CD8-positive, alpha-beta memory T cell (primary cell): ENCODE measurements at regions of chr12 and their contacts with region 1.

Region 1: GRCh38 chr12:103930034-103930786 is at the start of gene HSP90B1:
- DNase-seq: peak; percentile 99 to 100 (median 100)
- H3K4me3 ChIP-seq: peak within 1 kb of the TSS; percentile 74
- H3K4me3 Mint-ChIP-seq: peak within 1 kb of the TSS; percentile 89 to 98 (median 94)
- H3K27ac ChIP-seq: peak within 1 kb of the TSS; percentile 93
- H3K27ac Mint-ChIP-seq: peak within 1 kb of the TSS; percentile 99 to 100 (median 100)
- H3K4me1 ChIP-seq: peaks cover 57% of the 10 kb centered on the region
- H3K4me1 Mint-ChIP-seq: peaks cover 56 to 75% (median 71%) of the 10 kb centered on the region in 3 donors
- H3K27me3 ChIP-seq: no peaks in the 10 kb centered on the region
- H3K27me3 Mint-ChIP-seq: peaks cover 0 to 11% of the 10 kb centered on the region in 2 donors
- total RNA-seq, gene HSP90B1: 461 to 488 TPM

Region 2: GRCh38 chr12:103901518-103902173 is 28.6 kb before region 1 on chr12:
- CTCF ChIA-PET with region 1: interaction called, 23 read pairs
- POLR2A ChIA-PET with region 1: interaction called, 10 read pairs
- DNase-seq: peak in 4 of 5 donors; percentile 8 to 79 (median 66)
- H3K4me3 ChIP-seq: peak overlapping the region; percentile 49
- H3K4me3 Mint-ChIP-seq: peak overlapping the region; percentile 24 to 75 (median 69)
- H3K27ac ChIP-seq: no peak overlapping the region
- H3K27ac Mint-ChIP-seq: peak overlapping the region; percentile 43 to 89 (median 82)
- H3K4me1 ChIP-seq: peaks cover 55% of the 10 kb centered on the region
- H3K4me1 Mint-ChIP-seq: peaks cover 46 to 57% (median 56%) of the 10 kb centered on the region in 3 donors
- H3K27me3 ChIP-seq: no peaks in the 10 kb centered on the region
- H3K27me3 Mint-ChIP-seq: peaks cover 0 to 5% of the 10 kb centered on the region in 2 donors

Region 3: DNA sequence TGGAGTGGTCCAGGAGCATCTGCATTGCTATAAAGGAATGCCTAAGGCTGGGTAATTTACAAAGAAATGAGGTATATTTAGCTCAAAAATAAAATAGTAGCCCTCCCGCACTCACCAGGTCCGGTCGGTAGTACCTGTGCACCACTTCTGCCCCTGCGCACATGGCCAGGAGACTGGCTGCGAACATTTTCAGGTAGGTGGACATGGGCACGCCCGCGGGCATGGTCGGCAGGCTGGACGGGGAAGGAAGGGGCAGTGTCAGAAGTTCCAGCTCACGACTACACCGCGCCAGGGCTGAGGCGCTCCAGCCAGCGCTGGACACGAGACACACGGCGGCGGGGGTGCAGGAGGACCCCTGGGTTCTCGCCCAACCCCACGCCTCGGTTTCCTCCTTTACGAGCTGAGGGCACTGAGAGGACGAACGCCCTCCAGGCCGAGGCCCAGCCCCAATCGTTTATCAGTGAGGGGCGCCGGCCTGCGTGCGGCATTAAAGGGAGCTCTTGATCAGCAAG is 26.4 kb after region 1 on chr12:
- CTCF ChIA-PET with region 1: interaction called, 11 read pairs
- POLR2A ChIA-PET with region 1: interaction called, 22 read pairs
- DNase-seq: peak in 1 of 5 donors; percentile 2
- H3K4me3 ChIP-seq: peak overlapping the region; percentile 71
- H3K4me3 Mint-ChIP-seq: peak overlapping the region; percentile 96 to 100 (median 99)
- H3K27ac ChIP-seq: peak overlapping the region; percentile 71
- H3K27ac Mint-ChIP-seq: peak overlapping the region; percentile 93 to 99 (median 99)
- H3K4me1 ChIP-seq: peaks cover 14% of the 10 kb centered on the region
- H3K4me1 Mint-ChIP-seq: peaks cover 34 to 54% (median 45%) of the 10 kb centered on the region in 3 donors
- H3K27me3 ChIP-seq: no peaks in the 10 kb centered on the region
- H3K27me3 Mint-ChIP-seq: peaks cover 0 to 3% of the 10 kb centered on the region in 2 donors

Region 4: DNA sequence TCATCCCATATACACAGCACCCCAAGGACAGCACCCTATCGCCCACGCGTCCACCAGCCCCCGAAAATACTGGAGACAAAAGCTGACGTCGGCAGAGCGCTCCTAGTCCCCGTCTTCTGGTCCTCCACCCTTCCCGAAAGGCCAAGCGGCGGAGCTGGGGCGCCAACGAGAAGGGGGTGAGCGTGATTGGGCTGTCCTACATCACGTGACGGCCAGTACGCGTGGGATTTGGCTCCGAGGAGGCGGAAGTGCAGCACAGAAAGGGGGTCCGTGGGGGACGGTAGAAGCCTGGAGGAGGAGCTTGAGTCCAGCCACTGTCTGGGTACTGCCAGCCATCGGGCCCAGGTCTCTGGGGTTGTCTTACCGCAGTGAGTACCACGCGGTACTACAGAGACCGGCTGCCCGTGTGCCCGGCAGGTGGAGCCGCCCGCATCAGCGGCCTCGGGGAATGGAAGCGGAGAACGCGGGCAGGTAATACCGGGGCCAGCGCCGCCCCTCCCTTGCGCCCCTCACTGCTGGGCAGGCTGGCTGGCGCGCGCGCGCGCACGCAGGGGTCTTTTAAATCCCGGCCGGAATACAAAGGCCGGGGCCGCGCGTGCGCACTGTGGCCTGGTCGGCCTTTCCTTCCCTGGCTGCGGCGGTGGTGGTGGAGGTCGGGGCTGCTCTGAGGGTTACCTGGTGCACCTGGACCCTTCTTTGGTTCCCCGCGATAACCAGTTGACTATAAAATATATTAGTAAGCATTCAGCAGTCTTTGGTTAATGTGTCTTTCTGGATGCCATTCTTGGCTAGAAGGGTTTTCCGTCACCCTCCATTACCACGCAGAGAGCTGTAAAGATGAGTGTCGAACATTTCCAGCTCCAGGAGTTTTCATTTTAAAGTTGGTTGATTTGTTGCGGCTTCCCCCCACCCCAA is 35.6 kb after region 1 on chr12 and contains the start of gene TDG:
- CTCF ChIA-PET with region 1: interaction called, 11 read pairs
- POLR2A ChIA-PET with region 1: interaction called, 68 read pairs
- DNase-seq: peak; percentile 95 to 99 (median 97)
- H3K4me3 ChIP-seq: peak within 1 kb of the TSS; percentile 74
- H3K4me3 Mint-ChIP-seq: peak within 1 kb of the TSS; percentile 93 to 99 (median 96)
- H3K27ac ChIP-seq: peak within 1 kb of the TSS; percentile 90
- H3K27ac Mint-ChIP-seq: peak within 1 kb of the TSS; percentile 91 to 100 (median 99)
- H3K4me1 ChIP-seq: peaks cover 41% of the 10 kb centered on the region
- H3K4me1 Mint-ChIP-seq: peaks cover 54 to 68% (median 66%) of the 10 kb centered on the region in 3 donors
- H3K27me3 ChIP-seq: no peaks in the 10 kb centered on the region
- H3K27me3 Mint-ChIP-seq: no peaks in the 10 kb centered on the region
- total RNA-seq, gene TDG: 51.2 to 52.6 TPM

Region 5: GRCh38 chr12:104137913-104138796 is 207.9 kb after region 1 on chr12 and contains the start of gene NFYB:
- CTCF ChIA-PET with region 1: no interaction called
- POLR2A ChIA-PET with region 1: interaction called, 23 read pairs
- DNase-seq: peak; percentile 85 to 96 (median 93)
- H3K4me3 ChIP-seq: peak within 1 kb of the TSS; percentile 49
- H3K4me3 Mint-ChIP-seq: peak within 1 kb of the TSS; percentile 85 to 98 (median 92)
- H3K27ac ChIP-seq: peak within 1 kb of the TSS; percentile 44
- H3K27ac Mint-ChIP-seq: peak within 1 kb of the TSS; percentile 30 to 93 (median 92)
- H3K4me1 ChIP-seq: peaks cover 24% of the 10 kb centered on the region
- H3K4me1 Mint-ChIP-seq: peaks cover 6 to 18% (median 15%) of the 10 kb centered on the region in 3 donors
- H3K27me3 ChIP-seq: no peaks in the 10 kb centered on the region
- H3K27me3 Mint-ChIP-seq: peaks cover 0 to 2% of the 10 kb centered on the region in 2 donors
- total RNA-seq, gene NFYB: 25.5 to 27.5 TPM